Testis (tissue), 5 donors: ENCODE measurements at regions of chr6 and their contacts with region 1.

Region 1: DNA sequence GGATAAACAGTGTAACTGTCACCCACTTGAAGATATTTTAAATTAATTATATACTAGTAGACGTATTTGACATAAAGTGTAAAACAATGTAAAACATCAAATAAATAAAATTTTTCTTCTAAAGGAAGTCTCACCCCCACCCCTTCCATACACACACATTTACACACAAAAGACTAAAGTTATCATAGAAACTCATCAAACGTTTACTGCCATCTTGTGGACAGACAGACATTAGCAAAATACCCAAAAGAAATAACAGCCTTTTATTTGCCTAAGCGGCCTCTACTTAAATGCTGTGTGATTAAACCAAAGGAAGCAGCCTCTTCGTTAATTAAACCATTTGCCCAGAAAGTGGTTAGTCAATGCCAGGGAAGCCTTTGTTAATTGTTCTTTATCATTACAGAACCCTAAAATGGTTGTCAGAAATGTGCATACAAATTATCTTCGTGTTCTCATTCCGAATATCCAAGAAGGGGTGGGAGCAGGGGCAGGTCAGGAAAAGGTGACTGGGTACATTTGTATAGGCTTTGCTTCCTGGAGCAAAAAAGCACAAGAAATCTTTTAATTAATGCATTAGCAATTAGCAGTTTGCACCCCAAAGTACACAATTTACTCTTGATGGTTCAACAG is 176.2 kb upstream of the SASH1 start:
- DNase-seq: no peak
- H3K4me3 ChIP-seq: no peak overlapping the region
- H3K27ac ChIP-seq: no peak overlapping the region
- H3K4me1 ChIP-seq: no peaks in the 10 kb centered on the region
- H3K27me3 ChIP-seq: no peaks in the 10 kb centered on the region
- CTCF ChIP-seq: peak; percentile 58 to 62 (median 61)
- POLR2A ChIP-seq: no peak

Region 2: DNA sequence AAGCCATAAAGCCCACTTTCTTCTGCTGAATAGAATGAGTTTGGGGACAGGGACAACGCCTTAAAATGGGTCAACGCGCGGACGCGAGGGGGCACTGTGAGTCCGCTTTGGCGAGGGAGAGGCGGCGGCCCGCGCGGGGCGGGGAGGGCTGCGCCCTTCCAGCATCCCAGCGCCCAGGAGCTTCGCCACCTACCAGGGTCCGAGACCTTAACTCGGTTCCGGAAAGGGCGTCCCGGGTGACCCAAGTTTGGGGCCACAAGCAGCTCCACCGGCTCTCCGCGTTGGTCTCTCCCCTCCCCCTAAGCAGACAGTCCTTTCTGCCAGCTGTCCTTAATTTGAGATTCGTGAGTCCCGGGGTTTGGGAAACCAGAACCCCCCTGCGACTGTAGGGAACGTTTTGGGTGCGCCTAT is 659.7 kb before region 1 on chr6:
- intact Hi-C with region 1: loop called (anchors 10 kb)
- DNase-seq: peak; percentile 84
- H3K4me3 ChIP-seq: peak overlapping the region; percentile 9 to 78
- H3K27ac ChIP-seq: peak overlapping the region in 1 of 2 donors; percentile 48
- H3K4me1 ChIP-seq: no peaks in the 10 kb centered on the region
- H3K27me3 ChIP-seq: no peaks in the 10 kb centered on the region
- CTCF ChIP-seq: peak; percentile 53 to 71 (median 67)
- POLR2A ChIP-seq: no peak